ENCODE measurements at regions of chr17 and their contacts with region 1.

Region 1: DNA sequence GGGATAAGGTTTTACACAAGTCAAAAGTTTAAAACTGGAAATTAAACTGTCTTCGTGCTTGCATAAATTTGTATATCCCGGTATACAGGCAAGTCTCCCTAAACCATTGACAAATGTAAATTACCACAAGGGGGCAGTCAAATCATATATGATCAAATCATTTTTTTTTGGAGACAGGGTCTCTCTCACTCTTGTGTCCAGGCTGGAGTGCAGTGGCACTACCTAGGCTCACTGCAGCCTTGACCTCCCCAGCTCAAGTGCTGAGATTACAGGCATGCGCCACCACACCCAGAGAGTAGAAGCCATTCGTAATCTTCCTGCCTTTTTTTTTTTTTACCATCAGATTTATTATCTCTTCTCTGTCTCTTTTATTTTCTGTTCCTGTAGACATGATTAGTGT is 18.5 kb downstream of the TOP2A start:
- DNase-seq: no peak
- H3K4me3 Mint-ChIP-seq: no peak overlapping the region
- H3K27ac Mint-ChIP-seq: peak overlapping the region; percentile 82
- H3K4me1 Mint-ChIP-seq: peaks cover 36% of the 10 kb centered on the region
- H3K27me3 Mint-ChIP-seq: no peaks in the 10 kb centered on the region

Region 2: DNA sequence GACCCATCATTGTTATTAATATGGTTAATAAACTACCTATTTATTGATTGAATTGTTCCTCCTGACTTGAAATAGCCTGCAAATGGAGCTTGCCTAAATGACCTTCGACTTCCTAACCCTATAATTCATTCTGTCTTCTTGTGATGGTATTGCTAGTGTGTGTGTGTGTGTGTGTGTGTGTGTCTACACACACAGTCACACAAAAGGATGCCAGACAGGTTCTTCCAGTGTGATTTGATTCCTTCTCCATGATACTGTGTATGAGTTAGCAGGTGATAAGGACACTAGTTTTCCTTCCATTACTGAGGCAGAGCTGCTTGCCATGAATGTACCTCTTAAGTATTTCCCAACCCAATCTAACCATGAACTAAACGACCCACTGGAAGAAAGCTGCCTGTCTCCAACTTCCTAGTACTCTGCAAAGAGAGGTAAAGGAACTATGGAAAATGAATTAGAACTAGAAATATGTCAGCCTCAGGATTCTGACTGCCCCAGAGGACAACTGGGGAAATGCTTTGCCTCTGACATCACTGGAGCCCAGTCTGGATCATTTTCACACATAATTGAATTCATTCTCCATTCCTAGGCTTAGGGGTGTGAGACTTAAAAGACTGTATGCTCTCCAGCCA is 115.0 kb before region 1 on chr17:
- CTCF ChIA-PET with region 1: no interaction called
- DNase-seq: no peak
- H3K4me3 Mint-ChIP-seq: no peak overlapping the region
- H3K27ac Mint-ChIP-seq: peak overlapping the region; percentile 6
- H3K4me1 Mint-ChIP-seq: peaks cover 47% of the 10 kb centered on the region
- H3K27me3 Mint-ChIP-seq: peaks cover 3% of the 10 kb centered on the region

Region 3: DNA sequence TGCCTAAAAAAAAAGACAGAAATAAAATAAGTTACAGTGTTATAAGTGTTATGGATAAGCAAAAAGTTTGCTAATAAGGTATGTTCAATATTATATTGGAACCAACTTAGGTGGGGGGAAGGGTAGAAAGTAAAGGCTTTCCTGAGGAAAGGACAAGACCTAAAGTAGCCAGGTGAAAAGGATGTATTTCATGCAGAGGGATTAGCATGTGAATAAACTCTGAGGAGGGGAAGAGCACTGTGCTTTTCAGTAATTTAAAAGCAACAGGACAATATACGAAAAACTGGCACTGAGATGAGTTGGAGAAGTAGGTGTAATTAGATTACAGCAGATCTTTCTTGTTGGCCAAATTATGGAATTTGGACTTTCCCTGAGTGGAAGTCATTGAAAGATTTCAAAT is 10.9 kb after region 1 on chr17:
- CTCF ChIA-PET with region 1: interaction called, 14 read pairs
- DNase-seq: no peak
- H3K4me3 Mint-ChIP-seq: no peak overlapping the region
- H3K27ac Mint-ChIP-seq: peak overlapping the region; percentile 22
- H3K4me1 Mint-ChIP-seq: peaks cover 45% of the 10 kb centered on the region
- H3K27me3 Mint-ChIP-seq: no peaks in the 10 kb centered on the region

Region 4: GRCh38 chr17:40422990-40423616 is 23.9 kb after region 1 on chr17:
- CTCF ChIA-PET with region 1: no interaction called
- DNase-seq: no peak
- H3K4me3 Mint-ChIP-seq: no peak overlapping the region
- H3K27ac Mint-ChIP-seq: no peak overlapping the region
- H3K4me1 Mint-ChIP-seq: peaks cover 51% of the 10 kb centered on the region
- H3K27me3 Mint-ChIP-seq: peaks cover 11% of the 10 kb centered on the region